WTC11 (cell line): ENCODE measurements at regions of chr19 and their contacts with region 1.

Region 1: GRCh38 chr19:37594304-37594981 is at the starts of genes ZNF540 and ZNF571:
- DNase-seq: peak; percentile 94
- ATAC-seq: peak; percentile 97
- H3K4me3 Mint-ChIP-seq: peak within 1 kb of the TSS; percentile 94
- H3K27ac Mint-ChIP-seq: peak within 1 kb of the TSS; percentile 98
- H3K4me1 Mint-ChIP-seq: peaks cover 14% of the 10 kb centered on the region
- H3K27me3 Mint-ChIP-seq: peaks cover 28% of the 10 kb centered on the region
- CTCF ChIP-seq: no peak
- total RNA-seq, gene ZNF540: 0.07 to 0.53 TPM (median 0.28 TPM) in 3 replicates
- total RNA-seq, gene ZNF571: 3.9 to 5.1 TPM (median 4.4 TPM) in 3 replicates

Region 2: DNA sequence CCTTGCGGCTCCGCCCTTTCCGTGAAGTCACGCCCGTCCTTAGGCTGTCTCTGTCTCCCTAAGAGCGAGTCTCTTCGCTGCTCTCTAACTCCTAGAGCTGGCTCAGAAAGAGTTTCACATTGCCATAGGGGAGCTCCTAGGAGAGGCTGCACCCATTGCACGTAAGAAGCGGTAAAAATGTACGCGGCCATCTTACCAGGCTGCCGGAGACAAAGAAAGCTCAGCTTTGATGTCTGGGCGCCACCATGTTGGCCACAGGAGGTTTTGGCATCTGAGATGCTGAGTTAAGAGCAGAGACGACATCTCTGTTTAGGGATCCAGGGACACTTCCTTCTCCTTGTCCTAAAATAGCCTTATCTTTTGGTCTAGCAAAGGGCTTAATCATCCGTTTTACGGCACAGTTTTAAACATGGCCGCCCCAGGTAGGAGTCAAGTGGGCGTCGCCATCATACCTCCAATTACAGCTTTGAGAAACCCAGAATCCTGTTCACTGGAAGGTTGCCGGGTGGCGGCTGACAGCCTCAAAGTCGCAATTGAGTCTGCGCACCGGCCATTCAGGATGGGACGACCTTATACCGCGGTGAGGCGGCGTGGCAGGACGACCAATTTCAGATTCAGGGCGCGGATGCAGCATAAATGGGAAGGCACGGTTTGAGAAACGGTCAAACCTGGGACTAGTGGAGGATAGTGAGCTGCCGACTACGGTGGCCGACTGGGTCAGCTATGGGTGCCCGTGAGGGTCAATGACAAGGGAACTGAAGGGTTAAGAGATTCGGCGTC is 87.9 kb before region 1 on chr19 and contains the start of gene ZNF793:
- CTCF ChIA-PET with region 1: no interaction called
- POLR2A ChIA-PET with region 1: interaction called, 13 read pairs
- DNase-seq: peak; percentile 80
- ATAC-seq: peak; percentile 85
- H3K4me3 Mint-ChIP-seq: no peak within 1 kb of the TSS
- H3K27ac Mint-ChIP-seq: no peak within 1 kb of the TSS
- H3K4me1 Mint-ChIP-seq: no peaks in the 10 kb centered on the region
- H3K27me3 Mint-ChIP-seq: no peaks in the 10 kb centered on the region
- CTCF ChIP-seq: no peak
- total RNA-seq, gene ZNF793: 14.7 to 16.3 TPM (median 15.0 TPM) in 3 replicates

Region 3: GRCh38 chr19:37583340-37583739 is 11.1 kb before region 1 on chr19:
- CTCF ChIA-PET with region 1: interaction called, 11 read pairs
- POLR2A ChIA-PET with region 1: interaction called, 4 read pairs
- DNase-seq: peak; percentile 40
- ATAC-seq: peak; percentile 83
- H3K4me3 Mint-ChIP-seq: no peak overlapping the region
- H3K27ac Mint-ChIP-seq: no peak overlapping the region
- H3K4me1 Mint-ChIP-seq: no peaks in the 10 kb centered on the region
- H3K27me3 Mint-ChIP-seq: no peaks in the 10 kb centered on the region
- CTCF ChIP-seq: no peak

Region 4: GRCh38 chr19:37738371-37738770 is 143.9 kb after region 1 on chr19:
- CTCF ChIA-PET with region 1: no interaction called
- POLR2A ChIA-PET with region 1: no interaction called
- DNase-seq: no peak
- ATAC-seq: no peak
- H3K4me3 Mint-ChIP-seq: no peak overlapping the region
- H3K27ac Mint-ChIP-seq: no peak overlapping the region
- H3K4me1 Mint-ChIP-seq: no peaks in the 10 kb centered on the region
- H3K27me3 Mint-ChIP-seq: no peaks in the 10 kb centered on the region; the same call in 1 of the 2 replicates
- CTCF ChIP-seq: no peak